ENCODE measurements at regions of chr20 and their contacts with region 1.

Region 1: DNA sequence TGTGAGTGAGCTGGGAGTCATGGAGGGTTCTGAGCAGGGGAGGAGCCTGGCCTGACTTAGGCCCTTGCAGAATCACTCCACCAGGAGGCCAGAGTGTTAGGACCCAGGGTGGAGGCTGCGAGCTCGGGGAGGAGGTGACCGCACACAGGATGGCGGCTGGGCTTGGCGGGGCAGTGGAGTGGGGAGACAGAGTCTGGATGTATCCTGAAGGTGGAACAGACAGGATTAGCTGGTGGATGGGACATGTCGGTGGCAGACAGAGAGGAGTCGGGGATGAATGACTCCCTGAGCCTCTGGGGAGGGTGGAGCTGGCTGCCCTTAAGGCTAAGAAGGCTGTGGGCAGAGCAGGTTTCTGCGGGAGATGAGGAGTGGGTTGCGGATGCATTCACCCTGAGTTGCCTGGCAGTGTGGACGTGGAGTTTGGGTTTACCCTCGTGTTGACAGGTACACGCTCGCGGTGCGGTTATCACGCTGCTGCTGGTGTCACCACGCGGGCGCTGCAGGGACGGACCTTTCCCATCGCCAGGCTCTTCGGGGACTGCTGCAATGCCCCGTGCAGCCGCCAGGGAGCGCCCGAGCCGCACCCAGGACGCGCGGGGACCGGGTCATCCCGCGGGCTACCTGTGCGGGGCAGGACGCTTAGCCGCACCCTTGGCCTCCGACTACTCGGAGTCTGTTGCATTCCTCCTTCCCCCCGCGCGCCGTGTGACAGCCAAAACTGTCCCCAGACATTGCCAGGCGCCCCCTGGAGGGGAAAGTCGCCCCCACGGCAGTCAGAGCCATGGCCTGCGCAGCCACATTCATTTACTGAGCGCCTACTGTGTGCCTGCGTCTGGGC is 43.0 kb upstream of the PTGIS start:
- DNase-seq: peak; percentile 86 to 92
- H3K4me3 ChIP-seq: peak overlapping the region; percentile 12 to 25 (median 18)
- H3K27ac ChIP-seq: peak overlapping the region in 3 of 5 donors; percentile 18 to 65 (median 34)
- H3K4me1 ChIP-seq: peaks cover 0 to 48% (median 25%) of the 10 kb centered on the region in 4 donors
- H3K27me3 ChIP-seq: peaks cover 0 to 8% (median 0%) of the 10 kb centered on the region in 3 donors
- CTCF ChIP-seq: peak in 6 of 7 experiments; percentile 96 to 100 (median 100)
- EP300 ChIP-seq: no peak
- POLR2A ChIP-seq: no peak

Region 2: GRCh38 chr20:49541733-49542513 is 69.0 kb before region 1 on chr20:
- intact Hi-C with region 1: loop called (anchors 2 kb)
- DNase-seq: peak; percentile 79 to 87
- H3K4me3 ChIP-seq: no peak overlapping the region
- H3K27ac ChIP-seq: peak overlapping the region in 2 of 5 donors; percentile 20 to 64
- H3K4me1 ChIP-seq: peaks cover 0 to 12% (median 4%) of the 10 kb centered on the region in 4 donors
- H3K27me3 ChIP-seq: no peaks in the 10 kb centered on the region
- CTCF ChIP-seq: peak in 6 of 7 experiments; percentile 46 to 98 (median 84)
- EP300 ChIP-seq: no peak
- POLR2A ChIP-seq: no peak

Region 3: GRCh38 chr20:49785852-49786175 is 174.9 kb after region 1 on chr20:
- intact Hi-C with region 1: no loop called
- DNase-seq: no peak
- H3K4me3 ChIP-seq: no peak overlapping the region
- H3K27ac ChIP-seq: peak overlapping the region in 3 of 5 donors; percentile 4 to 65 (median 43)
- H3K4me1 ChIP-seq: peaks cover 0 to 35% (median 3%) of the 10 kb centered on the region in 4 donors
- H3K27me3 ChIP-seq: no peaks in the 10 kb centered on the region
- CTCF ChIP-seq: no peak
- EP300 ChIP-seq: no peak
- POLR2A ChIP-seq: no peak

Region 4: DNA sequence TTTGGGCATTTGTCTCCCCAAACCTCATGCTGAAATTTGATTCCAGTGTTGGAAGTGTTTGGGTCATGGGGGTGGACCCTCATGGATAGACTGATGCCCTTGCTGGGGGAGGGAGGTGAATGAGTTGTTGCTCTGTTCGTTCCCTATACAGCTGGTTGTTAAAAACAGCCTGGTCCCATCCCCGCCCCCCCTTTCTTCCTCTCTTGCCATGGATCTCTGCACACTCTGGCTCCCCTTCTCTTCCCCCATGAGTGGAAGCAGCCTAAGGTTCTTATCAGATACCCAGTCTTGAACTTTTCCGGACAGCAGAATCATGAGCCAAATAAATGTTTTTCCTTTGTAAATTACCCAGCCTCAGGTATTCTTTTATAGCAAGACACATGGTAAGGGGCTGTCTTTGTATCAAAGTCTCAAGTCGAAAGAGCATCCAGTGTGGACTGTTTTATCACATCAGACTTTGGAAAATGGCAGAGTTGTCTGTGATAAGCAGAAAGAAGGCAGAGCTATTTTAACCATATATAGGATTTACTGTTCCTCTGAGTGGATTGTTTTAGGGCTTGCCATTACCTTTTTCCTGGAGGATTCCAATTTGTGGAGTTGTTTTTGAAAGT is 233.0 kb after region 1 on chr20:
- intact Hi-C with region 1: loop called (anchors 5 kb)
- DNase-seq: no peak
- H3K4me3 ChIP-seq: no peak overlapping the region
- H3K27ac ChIP-seq: peak overlapping the region in 1 of 5 donors; percentile 1
- H3K4me1 ChIP-seq: peaks cover 0 to 28% (median 0%) of the 10 kb centered on the region in 4 donors
- H3K27me3 ChIP-seq: no peaks in the 10 kb centered on the region
- CTCF ChIP-seq: no peak
- EP300 ChIP-seq: no peak
- POLR2A ChIP-seq: no peak

Region 5: DNA sequence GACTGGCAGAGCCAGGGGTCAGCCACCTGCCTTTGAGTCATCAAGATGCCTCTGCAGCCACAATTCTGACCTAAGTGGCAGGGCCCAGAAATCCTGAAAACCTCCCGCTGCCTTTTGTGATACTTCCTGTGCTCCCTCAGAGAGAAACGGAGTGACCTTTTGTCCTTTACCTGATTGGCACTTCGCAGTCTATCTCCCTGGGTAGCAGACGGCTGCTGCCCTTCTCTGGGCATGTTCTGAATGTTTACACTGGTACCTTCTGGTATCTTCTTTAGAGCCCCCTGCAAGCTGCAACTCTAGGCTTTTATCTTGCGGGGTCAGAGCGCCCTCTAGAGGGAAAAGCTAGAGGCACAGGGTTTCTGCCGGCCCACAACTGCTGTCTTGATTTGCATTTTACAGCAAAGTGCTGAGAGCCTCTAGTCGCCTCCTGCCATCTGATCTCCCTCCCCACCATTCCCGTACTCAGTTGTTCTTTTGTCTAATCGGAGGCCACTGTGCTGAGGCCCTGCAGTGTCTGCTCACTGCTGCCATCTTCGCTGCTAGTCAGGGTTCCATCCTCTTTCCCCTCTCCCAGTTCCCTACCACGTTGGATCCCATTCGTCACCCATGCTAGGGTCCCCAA is 277.5 kb after region 1 on chr20:
- intact Hi-C with region 1: loop called (anchors 2 kb)
- DNase-seq: peak; percentile 56 to 80
- H3K4me3 ChIP-seq: no peak overlapping the region
- H3K27ac ChIP-seq: peak overlapping the region in 3 of 5 donors; percentile 32 to 69 (median 59)
- H3K4me1 ChIP-seq: peaks cover 39 to 71% (median 57%) of the 10 kb centered on the region in 4 donors
- H3K27me3 ChIP-seq: no peaks in the 10 kb centered on the region
- CTCF ChIP-seq: peak in 5 of 7 experiments; percentile 48 to 76 (median 60)
- EP300 ChIP-seq: no peak
- POLR2A ChIP-seq: no peak